Naive thymus-derived CD4-positive, alpha-beta T cell (primary cell): ENCODE measurements at regions of chr9 and their contacts with region 1.

Region 1: DNA sequence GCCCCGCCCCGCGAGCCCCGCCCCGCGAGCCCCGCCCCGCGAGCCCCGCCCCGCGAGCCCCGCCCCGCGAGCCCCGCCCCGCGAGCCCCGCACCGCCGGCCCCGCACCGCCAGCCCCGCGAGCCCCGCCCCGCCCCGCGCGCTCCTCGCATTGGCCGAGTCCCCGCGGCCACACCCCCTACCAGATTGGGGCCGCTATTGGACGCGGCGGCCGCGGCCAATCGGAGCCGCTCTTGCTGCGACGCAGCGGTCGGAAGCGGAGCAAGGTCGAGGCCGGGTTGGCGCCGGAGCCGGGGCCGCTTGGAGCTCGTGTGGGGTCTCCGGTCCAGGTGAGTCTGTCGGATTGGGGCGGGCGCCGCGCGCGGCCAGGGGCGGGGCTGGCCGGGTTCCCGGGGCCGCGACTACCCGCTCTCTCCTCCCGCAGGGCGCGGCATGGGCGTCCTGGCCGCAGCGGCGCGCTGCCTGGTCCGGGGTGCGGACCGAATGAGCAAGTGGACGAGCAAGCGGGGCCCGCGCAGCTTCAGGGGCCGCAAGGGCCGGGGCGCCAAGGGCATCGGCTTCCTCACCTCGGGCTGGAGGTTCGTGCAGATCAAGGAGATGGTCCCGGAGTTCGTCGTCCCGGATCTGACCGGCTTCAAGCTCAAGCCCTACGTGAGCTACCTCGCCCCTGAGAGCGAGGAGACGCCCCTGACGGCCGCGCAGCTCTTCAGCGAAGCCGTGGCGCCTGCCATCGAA is at the start of gene MRPL41:
- DNase-seq: peak; percentile 77 to 96 (median 85)
- ATAC-seq: peak; percentile 94
- H3K4me3 ChIP-seq: peak within 1 kb of the TSS; percentile 77
- H3K4me3 Mint-ChIP-seq: peak within 1 kb of the TSS; percentile 82 to 96 (median 90)
- H3K27ac ChIP-seq: peak within 1 kb of the TSS; percentile 85
- H3K27ac Mint-ChIP-seq: peak within 1 kb of the TSS; percentile 77 to 91 (median 83)
- H3K4me1 ChIP-seq: peaks cover 0 to 6% of the 10 kb centered on the region in 2 donors
- H3K4me1 Mint-ChIP-seq: peaks cover 11 to 24% (median 17%) of the 10 kb centered on the region in 7 donors
- H3K27me3 ChIP-seq: no peaks in the 10 kb centered on the region
- H3K27me3 Mint-ChIP-seq: no peaks in the 10 kb centered on the region
- total RNA-seq, gene MRPL41: 41.1 to 102 (median 53.9) TPM

Region 2: GRCh38 chr9:137129456-137130175 is 422.2 kb before region 1 on chr9:
- CTCF ChIA-PET with region 1: no interaction called
- POLR2A ChIA-PET with region 1: no interaction called
- intact Hi-C with region 1: loop called in 1 of 2 experiments (anchors 5 kb)
- DNase-seq: peak; percentile 74 to 93 (median 90)
- ATAC-seq: peak; percentile 98
- H3K4me3 ChIP-seq: peak overlapping the region; percentile 85
- H3K4me3 Mint-ChIP-seq: peak overlapping the region; percentile 83 to 93 (median 90)
- H3K27ac ChIP-seq: peak overlapping the region; percentile 85
- H3K27ac Mint-ChIP-seq: peak overlapping the region; percentile 67 to 88 (median 81)
- H3K4me1 ChIP-seq: peaks cover 21 to 28% of the 10 kb centered on the region in 2 donors
- H3K4me1 Mint-ChIP-seq: peaks cover 23 to 34% (median 27%) of the 10 kb centered on the region in 7 donors
- H3K27me3 ChIP-seq: no peaks in the 10 kb centered on the region
- H3K27me3 Mint-ChIP-seq: peaks cover 9 to 10% (median 9%) of the 10 kb centered on the region in 5 donors

Region 3: DNA sequence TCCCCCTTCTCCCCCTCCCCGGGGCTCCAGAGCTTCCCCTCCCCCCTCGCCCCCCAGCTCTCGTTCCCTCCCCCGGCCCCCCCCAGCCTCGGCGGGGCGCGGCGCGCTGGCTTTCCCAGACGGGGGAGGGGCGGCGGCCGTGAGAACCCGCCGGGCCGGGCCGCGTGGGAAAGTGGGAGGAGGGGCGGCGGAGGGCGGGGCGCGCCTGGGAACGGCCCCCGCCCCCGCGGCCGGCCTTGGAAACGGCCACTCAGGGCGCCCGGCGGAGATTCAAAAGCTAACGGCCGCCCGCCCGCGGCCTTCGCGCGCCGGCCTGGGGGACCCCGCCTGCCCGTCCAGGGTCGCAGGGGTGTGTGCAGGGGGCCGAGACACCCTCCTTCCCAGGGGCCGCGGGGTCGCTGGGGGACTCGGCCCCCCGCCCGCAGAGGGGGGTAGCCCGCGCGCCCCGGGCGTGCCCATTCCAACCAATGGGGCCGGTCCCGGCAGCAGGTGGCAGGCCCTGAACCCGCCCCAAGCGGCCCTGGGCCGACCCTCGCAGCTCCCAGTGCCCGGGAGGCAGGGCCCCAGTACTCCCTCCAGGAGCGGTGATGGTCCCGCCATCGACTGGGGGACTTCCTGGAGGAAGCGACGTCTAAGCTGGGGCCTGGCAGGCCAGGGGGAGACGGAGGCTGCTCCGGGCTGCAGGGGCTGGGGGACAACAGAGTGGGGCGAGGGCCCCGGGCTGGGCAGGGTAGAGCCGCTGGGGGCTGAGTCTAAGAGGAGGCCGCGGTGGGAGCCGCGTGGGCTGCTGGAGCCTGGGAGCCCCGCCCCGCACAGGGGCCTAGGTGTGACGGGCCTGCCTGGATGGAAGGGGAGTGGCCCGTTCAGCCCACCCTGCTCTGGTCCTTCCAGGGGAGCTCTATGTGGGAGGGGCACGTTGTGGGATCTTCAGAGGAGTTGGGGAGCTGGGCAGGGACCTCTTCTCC is 235.5 kb before region 1 on chr9:
- CTCF ChIA-PET with region 1: no interaction called
- POLR2A ChIA-PET with region 1: no interaction called
- intact Hi-C with region 1: no loop called
- DNase-seq: peak in 1 of 9 donors; percentile 15
- ATAC-seq: peak; percentile 12
- H3K4me3 ChIP-seq: no peak overlapping the region
- H3K4me3 Mint-ChIP-seq: peak overlapping the region in 2 of 10 donors; percentile 35 to 63
- H3K27ac ChIP-seq: no peak overlapping the region
- H3K27ac Mint-ChIP-seq: no peak overlapping the region
- H3K4me1 ChIP-seq: peaks cover 0 to 10% of the 10 kb centered on the region in 2 donors
- H3K4me1 Mint-ChIP-seq: peaks cover 0 to 7% (median 5%) of the 10 kb centered on the region in 7 donors
- H3K27me3 ChIP-seq: no peaks in the 10 kb centered on the region
- H3K27me3 Mint-ChIP-seq: peaks cover 0 to 3% (median 0%) of the 10 kb centered on the region in 5 donors

Region 4: GRCh38 chr9:137423004-137423874 is 128.6 kb before region 1 on chr9 and contains the starts of genes EXD3 and NOXA1:
- CTCF ChIA-PET with region 1: no interaction called
- POLR2A ChIA-PET with region 1: interaction called, 3 read pairs
- intact Hi-C with region 1: loop called (anchors 1 to 10 kb)
- DNase-seq: peak; percentile 84 to 99 (median 91)
- ATAC-seq: peak; percentile 97
- H3K4me3 ChIP-seq: peak within 1 kb of the TSS; percentile 65
- H3K4me3 Mint-ChIP-seq: peak within 1 kb of the TSS; percentile 76 to 90 (median 82)
- H3K27ac ChIP-seq: peak within 1 kb of the TSS; percentile 62
- H3K27ac Mint-ChIP-seq: peak within 1 kb of the TSS; percentile 28 to 91 (median 66)
- H3K4me1 ChIP-seq: peaks cover 0 to 5% of the 10 kb centered on the region in 2 donors
- H3K4me1 Mint-ChIP-seq: peaks cover 2 to 21% (median 13%) of the 10 kb centered on the region in 7 donors
- H3K27me3 ChIP-seq: no peaks in the 10 kb centered on the region
- H3K27me3 Mint-ChIP-seq: peaks cover 0 to 9% (median 0%) of the 10 kb centered on the region in 5 donors
- total RNA-seq, gene EXD3: 11.7 to 27.2 (median 24.7) TPM
- total RNA-seq, gene NOXA1: 0.94 to 11.1 (median 6.0) TPM

Region 5: GRCh38 chr9:137578518-137579258 is 26.9 kb after region 1 on chr9 and contains the start of gene DPH7:
- CTCF ChIA-PET with region 1: interaction called, 3 read pairs
- POLR2A ChIA-PET with region 1: interaction called, 6 read pairs
- intact Hi-C with region 1: loop called (anchors 1 kb)
- DNase-seq: peak; percentile 84 to 98 (median 92)
- ATAC-seq: peak; percentile 99
- H3K4me3 ChIP-seq: peak within 1 kb of the TSS; percentile 83
- H3K4me3 Mint-ChIP-seq: peak within 1 kb of the TSS; percentile 72 to 90 (median 84)
- H3K27ac ChIP-seq: peak within 1 kb of the TSS; percentile 94
- H3K27ac Mint-ChIP-seq: peak within 1 kb of the TSS in 8 of 9 donors; percentile 33 to 84 (median 64)
- H3K4me1 ChIP-seq: peaks cover 8 to 13% of the 10 kb centered on the region in 2 donors
- H3K4me1 Mint-ChIP-seq: peaks cover 12 to 36% (median 30%) of the 10 kb centered on the region in 7 donors
- H3K27me3 ChIP-seq: no peaks in the 10 kb centered on the region
- H3K27me3 Mint-ChIP-seq: no peaks in the 10 kb centered on the region
- total RNA-seq, gene DPH7: 43.4 to 77.5 (median 49.9) TPM

Region 6: GRCh38 chr9:137605121-137606004 is 53.5 kb after region 1 on chr9 and contains the start of gene ARRDC1:
- CTCF ChIA-PET with region 1: no interaction called
- POLR2A ChIA-PET with region 1: interaction called, 5 read pairs
- intact Hi-C with region 1: loop called (anchors 1 kb)
- DNase-seq: peak; percentile 77 to 95 (median 88)
- ATAC-seq: peak; percentile 91
- H3K4me3 ChIP-seq: peak within 1 kb of the TSS; percentile 69
- H3K4me3 Mint-ChIP-seq: peak within 1 kb of the TSS; percentile 66 to 92 (median 84)
- H3K27ac ChIP-seq: peak within 1 kb of the TSS; percentile 85
- H3K27ac Mint-ChIP-seq: peak within 1 kb of the TSS in 5 of 9 donors; percentile 39 to 82 (median 52)
- H3K4me1 ChIP-seq: peaks cover 6 to 10% of the 10 kb centered on the region in 2 donors
- H3K4me1 Mint-ChIP-seq: peaks cover 0 to 39% (median 24%) of the 10 kb centered on the region in 7 donors
- H3K27me3 ChIP-seq: no peaks in the 10 kb centered on the region
- H3K27me3 Mint-ChIP-seq: no peaks in the 10 kb centered on the region
- total RNA-seq, gene ARRDC1: 53.7 to 126 (median 82.6) TPM